Right ventricle myocardium inferior (tissue), 1 donor: ENCODE measurements at regions of chr7 and their contacts with region 1.

Region 1: DNA sequence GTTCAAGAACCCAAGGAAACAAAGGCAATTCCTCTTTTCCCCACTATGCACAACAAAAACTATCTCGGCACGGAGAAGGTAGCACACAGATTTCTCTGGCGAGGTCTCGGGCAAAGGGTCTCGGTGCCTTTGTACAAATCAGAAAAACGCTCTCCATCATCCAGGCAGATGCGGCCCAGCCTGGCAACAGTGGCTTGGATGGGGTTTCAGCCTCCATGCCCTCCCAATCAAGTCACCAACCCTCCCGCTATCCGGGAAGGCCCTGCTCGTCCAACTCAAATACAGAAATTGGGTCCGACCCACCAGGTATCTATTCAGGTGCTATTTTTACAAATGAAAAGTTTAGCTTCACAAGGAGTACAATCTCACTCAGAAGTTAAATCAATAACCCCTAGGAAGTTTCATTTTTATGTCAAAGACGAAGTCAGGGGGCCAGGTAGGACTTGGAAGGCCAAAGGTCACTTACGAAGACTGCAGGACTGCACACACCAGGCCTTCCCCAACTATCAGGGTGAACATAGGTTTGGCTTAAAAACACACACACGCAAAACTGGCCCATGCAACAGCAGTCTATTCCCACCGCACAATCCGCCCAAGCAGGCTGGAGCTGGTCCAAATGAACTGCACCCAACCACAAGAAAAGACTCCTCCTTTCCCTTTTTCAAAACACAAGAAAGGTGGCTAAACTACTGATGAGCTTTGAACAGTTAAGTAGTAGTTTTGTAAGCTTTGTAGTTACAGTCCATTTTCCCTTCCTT is 43.0 kb downstream of the GNA12 start:
- DNase-seq: no peak
- ATAC-seq: peak; percentile 15

Region 2: DNA sequence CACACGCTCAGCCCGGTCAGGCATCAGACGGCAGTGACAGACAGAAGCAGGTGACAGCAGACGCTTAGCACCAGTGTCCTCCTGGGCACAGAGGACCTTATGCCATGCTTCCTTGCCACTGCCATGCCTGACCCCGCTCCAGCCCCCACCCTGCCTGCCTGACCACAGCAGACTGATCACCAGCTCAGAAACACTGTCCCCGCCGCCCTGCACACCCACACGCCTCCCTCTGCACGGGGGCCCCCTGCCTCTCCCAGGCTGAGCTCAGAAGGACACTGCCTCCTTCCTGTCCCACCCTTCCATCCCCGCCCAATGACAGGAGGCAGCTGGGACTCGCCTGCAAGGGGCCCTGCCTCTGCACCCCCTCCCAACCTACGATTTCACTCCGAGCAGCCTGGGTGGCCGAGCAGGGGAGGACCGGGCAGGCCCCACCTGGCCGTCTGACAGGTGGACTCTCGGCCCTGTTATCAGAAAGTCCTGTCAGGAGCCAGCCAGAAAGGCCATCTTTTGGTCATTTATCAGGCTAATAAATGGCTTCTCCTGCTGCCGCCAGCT is 947.6 kb before region 1 on chr7:
- intact Hi-C with region 1: no loop called
- DNase-seq: peak; percentile 42
- ATAC-seq: no peak

Region 3: GRCh38 chr7:2719007-2719406 is 82.1 kb before region 1 on chr7:
- intact Hi-C with region 1: loop called (anchors 5 kb)
- DNase-seq: peak; percentile 63
- ATAC-seq: no peak

Region 4: GRCh38 chr7:2750004-2750407 is 51.1 kb before region 1 on chr7:
- intact Hi-C with region 1: no loop called
- DNase-seq: no peak
- ATAC-seq: no peak

Region 5: GRCh38 chr7:2760098-2760889 is 40.8 kb before region 1 on chr7:
- intact Hi-C with region 1: loop called (anchors 2 kb)
- DNase-seq: peak; percentile 74
- ATAC-seq: peak; percentile 76

Region 6: GRCh38 chr7:2821842-2822507 is 20.9 kb after region 1 on chr7:
- intact Hi-C with region 1: loop called (anchors 2 kb)
- DNase-seq: no peak
- ATAC-seq: no peak